ENCODE measurements at regions of chr20 and their contacts with region 1.

Region 1: GRCh38 chr20:57596998-57597939 is 23.0 kb downstream of the ZBP1 start:
- H3K4me3 ChIP-seq: no peak overlapping the region
- H3K27ac ChIP-seq: no peak overlapping the region
- H3K4me1 ChIP-seq: no peaks in the 10 kb centered on the region
- CTCF ChIP-seq: peak; percentile 92

Region 2: GRCh38 chr20:57498425-57499400 is 98.6 kb before region 1 on chr20:
- CTCF ChIA-PET with region 1: interaction called, 12 read pairs
- POLR2A ChIA-PET with region 1: no interaction called
- H3K4me3 ChIP-seq: no peak overlapping the region
- H3K27ac ChIP-seq: no peak overlapping the region
- H3K4me1 ChIP-seq: peaks cover 3% of the 10 kb centered on the region; the same call in 1 of the 2 replicates
- CTCF ChIP-seq: peak; percentile 65

Region 3: DNA sequence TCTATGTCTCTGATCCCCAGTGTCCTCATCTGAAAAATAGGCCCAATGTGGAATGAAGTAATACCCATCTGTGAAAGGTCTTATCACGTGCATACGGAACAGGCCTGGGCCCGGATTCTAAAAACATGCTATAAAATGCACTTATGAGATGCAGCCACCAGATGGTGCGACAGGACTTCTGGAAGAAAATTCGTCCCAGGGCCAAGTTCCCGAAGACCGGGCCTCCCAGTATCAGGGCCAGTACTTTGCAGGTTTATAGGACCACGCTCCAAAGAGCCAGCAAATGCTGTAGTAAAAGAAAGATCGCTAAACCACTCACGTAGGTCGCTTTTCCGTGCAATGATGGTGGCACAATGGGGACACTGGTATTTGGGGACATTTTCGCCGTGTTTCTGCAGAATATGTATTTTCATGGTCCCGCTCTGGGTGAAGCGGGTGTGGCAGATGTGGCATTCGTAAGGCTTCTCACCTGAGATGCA is 83.0 kb before region 1 on chr20:
- CTCF ChIA-PET with region 1: interaction called, 124 read pairs
- POLR2A ChIA-PET with region 1: no interaction called
- H3K4me3 ChIP-seq: no peak overlapping the region
- H3K27ac ChIP-seq: no peak overlapping the region
- H3K4me1 ChIP-seq: no peaks in the 10 kb centered on the region
- CTCF ChIP-seq: peak; percentile 55

Region 4: GRCh38 chr20:57573890-57574289 is 23.4 kb before region 1 on chr20:
- CTCF ChIA-PET with region 1: interaction called, 13 read pairs
- POLR2A ChIA-PET with region 1: no interaction called
- H3K4me3 ChIP-seq: no peak overlapping the region
- H3K27ac ChIP-seq: no peak overlapping the region
- H3K4me1 ChIP-seq: no peaks in the 10 kb centered on the region
- CTCF ChIP-seq: peak; percentile 39

Region 5: DNA sequence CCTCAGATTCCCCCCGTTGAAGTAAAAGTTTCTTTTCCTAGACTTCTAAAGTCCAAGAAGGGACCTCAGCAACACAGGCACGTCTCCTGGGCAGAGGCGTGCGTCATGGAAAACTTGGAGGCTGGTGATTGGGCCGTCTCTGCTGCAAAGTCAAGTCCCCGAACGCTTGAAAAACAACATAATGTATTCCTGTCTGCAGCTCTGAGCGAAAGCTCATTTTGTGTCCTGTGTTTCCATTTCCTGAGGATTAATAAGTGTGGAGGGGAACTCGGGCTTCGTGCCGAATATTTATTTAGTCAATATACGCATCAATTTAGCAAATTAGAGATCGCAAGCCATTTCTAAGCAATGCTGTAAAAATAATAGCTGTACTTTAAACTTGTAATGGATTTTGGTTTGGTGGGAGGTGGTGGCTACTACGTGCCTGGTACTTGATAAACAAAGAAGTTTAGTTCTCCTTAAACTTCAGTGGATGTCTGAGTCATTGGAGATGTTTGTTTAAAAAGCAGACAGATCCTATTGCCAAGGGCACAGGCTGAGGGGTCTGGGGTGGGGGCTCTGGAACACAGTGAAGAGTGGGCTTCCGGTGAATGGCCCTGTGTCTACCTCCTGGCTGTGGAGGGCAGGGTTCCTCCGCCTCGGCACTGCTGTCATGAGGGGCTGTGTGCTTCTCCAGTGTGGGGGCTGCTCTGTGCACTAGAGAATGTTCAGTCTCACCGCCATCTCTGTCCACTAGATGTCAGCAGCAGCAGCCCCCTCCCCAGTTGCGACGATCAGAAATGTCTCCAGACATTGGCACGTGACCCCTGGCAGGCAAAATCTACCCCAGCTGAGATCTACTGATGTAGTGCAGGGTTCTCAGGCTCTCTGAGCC is 14.6 kb before region 1 on chr20:
- CTCF ChIA-PET with region 1: interaction called, 41 read pairs
- POLR2A ChIA-PET with region 1: no interaction called
- H3K4me3 ChIP-seq: no peak overlapping the region
- H3K27ac ChIP-seq: peak overlapping the region; percentile 94
- H3K4me1 ChIP-seq: peaks cover 24% of the 10 kb centered on the region
- CTCF ChIP-seq: peak; percentile 88

Region 6: GRCh38 chr20:58087193-58087858 is 490.1 kb after region 1 on chr20:
- CTCF ChIA-PET with region 1: interaction called, 28 read pairs
- POLR2A ChIA-PET with region 1: no interaction called
- H3K4me3 ChIP-seq: no peak overlapping the region
- H3K27ac ChIP-seq: no peak overlapping the region
- H3K4me1 ChIP-seq: no peaks in the 10 kb centered on the region
- CTCF ChIP-seq: no peak

Region 7: DNA sequence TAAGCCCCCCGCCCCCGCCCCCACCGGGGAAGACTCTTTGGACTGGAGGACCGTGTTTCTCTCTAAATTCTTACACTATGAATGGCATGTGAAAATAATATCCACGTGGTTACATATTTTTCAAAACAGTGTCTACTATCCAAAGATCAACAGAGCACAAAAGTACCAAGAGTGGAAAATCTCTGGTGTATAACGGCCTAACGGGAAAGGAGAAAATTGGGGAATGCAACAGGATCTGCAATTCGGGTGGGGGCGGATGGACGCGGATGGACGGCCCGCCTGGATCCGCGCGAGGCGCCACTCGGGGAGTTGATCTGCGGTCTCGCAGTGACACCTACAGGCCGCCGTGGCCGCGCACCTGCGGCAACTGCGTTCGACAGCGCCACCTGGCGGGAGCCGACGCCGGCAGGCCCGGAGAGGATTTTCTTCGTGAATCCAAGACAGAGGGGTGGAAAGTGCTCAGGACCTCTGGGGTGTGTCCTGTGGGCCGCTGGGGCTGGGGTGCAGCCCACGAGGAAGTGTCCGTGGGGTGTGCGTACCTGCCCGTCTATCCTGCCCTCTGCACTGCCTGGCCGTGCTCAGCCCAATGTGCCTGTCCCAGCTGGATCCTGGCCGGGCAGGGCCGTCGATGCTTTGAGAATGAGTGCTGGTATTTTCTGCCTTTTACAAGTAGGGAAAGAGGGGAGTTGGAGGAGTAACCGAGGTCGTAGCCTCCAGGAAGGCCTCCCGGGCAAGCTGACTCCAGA is 612.6 kb after region 1 on chr20:
- CTCF ChIA-PET with region 1: interaction called, 94 read pairs
- POLR2A ChIA-PET with region 1: no interaction called
- H3K4me3 ChIP-seq: no peak overlapping the region
- H3K27ac ChIP-seq: no peak overlapping the region
- H3K4me1 ChIP-seq: no peaks in the 10 kb centered on the region
- CTCF ChIP-seq: peak; percentile 100